CD8-positive, alpha-beta memory T cell (primary cell): ENCODE measurements at regions of chr17 and their contacts with region 1.

Region 1: DNA sequence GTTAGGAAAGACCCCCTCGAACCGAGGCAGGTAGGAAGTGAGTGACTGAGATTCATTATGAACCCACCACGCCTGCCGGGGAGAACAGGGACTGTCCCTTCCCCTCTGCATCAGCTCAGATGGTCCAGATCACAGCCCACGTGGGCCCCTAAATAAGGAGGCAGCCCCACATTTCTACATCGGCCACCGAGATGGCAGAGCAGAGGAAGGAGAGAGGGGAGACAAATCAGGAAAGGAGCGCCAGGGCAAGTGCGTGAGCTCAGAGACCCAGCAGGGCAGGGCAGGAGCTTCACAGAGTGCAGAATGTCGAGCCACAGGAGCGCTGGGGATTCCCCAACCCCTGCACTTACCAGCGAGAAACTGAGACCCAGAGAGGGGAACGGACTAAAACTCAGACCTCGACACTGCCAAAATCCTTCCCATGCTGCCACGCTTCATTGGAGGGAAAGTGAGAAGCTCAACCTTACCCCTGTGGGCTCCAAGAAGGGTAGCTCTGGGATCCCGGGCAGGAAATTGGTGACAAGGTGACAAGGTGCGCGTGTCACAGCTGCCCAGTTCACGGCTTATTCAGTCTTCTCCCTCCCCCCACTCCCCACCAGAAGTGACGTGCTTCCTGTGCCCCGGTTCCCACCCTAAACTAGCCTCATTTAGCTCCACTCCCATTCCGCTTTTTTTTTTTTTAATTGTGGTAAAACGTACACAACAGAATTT is at the start of gene ICAM2:
- DNase-seq: peak; percentile 90 to 98 (median 96)
- H3K4me3 ChIP-seq: peak within 1 kb of the TSS; percentile 83
- H3K4me3 Mint-ChIP-seq: peak within 1 kb of the TSS; percentile 96 to 100 (median 98)
- H3K27ac ChIP-seq: peak within 1 kb of the TSS; percentile 90
- H3K27ac Mint-ChIP-seq: peak within 1 kb of the TSS; percentile 99 to 100 (median 100)
- H3K4me1 ChIP-seq: peaks cover 82% of the 10 kb centered on the region
- H3K4me1 Mint-ChIP-seq: peaks cover 68 to 90% (median 72%) of the 10 kb centered on the region in 3 donors
- H3K27me3 ChIP-seq: no peaks in the 10 kb centered on the region
- H3K27me3 Mint-ChIP-seq: peaks cover 0 to 5% of the 10 kb centered on the region in 2 donors
- total RNA-seq, gene ICAM2: 77.4 to 80.7 TPM

Region 2: DNA sequence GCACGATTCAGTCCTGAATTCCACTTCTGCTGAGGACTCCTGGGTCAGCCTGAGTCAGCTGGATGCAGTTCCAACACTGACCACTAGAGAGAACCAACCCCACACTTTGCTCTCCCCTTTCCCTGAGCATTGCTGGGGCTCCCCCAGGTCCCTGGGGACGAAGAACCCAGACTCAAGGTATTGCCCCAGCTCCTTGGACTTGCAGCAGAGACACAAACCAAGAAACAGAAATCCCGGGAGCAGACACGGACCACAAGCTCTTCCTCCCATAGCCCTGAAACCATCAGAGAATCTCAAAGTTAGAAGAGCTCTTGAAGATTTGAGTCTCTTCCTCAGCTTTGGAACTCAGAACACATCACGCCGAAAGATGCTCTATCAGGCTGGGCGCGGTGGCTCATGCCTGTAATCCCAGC is 100.9 kb before region 1 on chr17:
- CTCF ChIA-PET with region 1: interaction called, 212 read pairs
- POLR2A ChIA-PET with region 1: interaction called, 13 read pairs
- DNase-seq: peak; percentile 57 to 81 (median 71)
- H3K4me3 ChIP-seq: no peak overlapping the region
- H3K4me3 Mint-ChIP-seq: no peak overlapping the region
- H3K27ac ChIP-seq: no peak overlapping the region
- H3K27ac Mint-ChIP-seq: peak overlapping the region in 5 of 8 donors; percentile 17 to 78 (median 63)
- H3K4me1 ChIP-seq: peaks cover 8% of the 10 kb centered on the region
- H3K4me1 Mint-ChIP-seq: peaks cover 6 to 10% (median 10%) of the 10 kb centered on the region in 3 donors
- H3K27me3 ChIP-seq: no peaks in the 10 kb centered on the region
- H3K27me3 Mint-ChIP-seq: peaks cover 0 to 3% of the 10 kb centered on the region in 2 donors

Region 3: GRCh38 chr17:63931099-63931561 is 89.1 kb before region 1 on chr17:
- CTCF ChIA-PET with region 1: interaction called, 27 read pairs
- POLR2A ChIA-PET with region 1: no interaction called
- DNase-seq: peak; percentile 40 to 74 (median 60)
- H3K4me3 ChIP-seq: peak overlapping the region; percentile 68
- H3K4me3 Mint-ChIP-seq: peak overlapping the region; percentile 75 to 93 (median 90)
- H3K27ac ChIP-seq: peak overlapping the region; percentile 27
- H3K27ac Mint-ChIP-seq: peak overlapping the region; percentile 81 to 96 (median 91)
- H3K4me1 ChIP-seq: peaks cover 24% of the 10 kb centered on the region
- H3K4me1 Mint-ChIP-seq: peaks cover 20 to 30% (median 23%) of the 10 kb centered on the region in 3 donors
- H3K27me3 ChIP-seq: no peaks in the 10 kb centered on the region
- H3K27me3 Mint-ChIP-seq: no peaks in the 10 kb centered on the region

Region 4: GRCh38 chr17:63984651-63985386 is 35.4 kb before region 1 on chr17:
- CTCF ChIA-PET with region 1: interaction called, 246 read pairs
- POLR2A ChIA-PET with region 1: interaction called, 3 read pairs
- DNase-seq: peak in 4 of 5 donors; percentile 51 to 64 (median 59)
- H3K4me3 ChIP-seq: no peak overlapping the region
- H3K4me3 Mint-ChIP-seq: peak overlapping the region in 6 of 7 donors; percentile 3 to 61 (median 30)
- H3K27ac ChIP-seq: no peak overlapping the region
- H3K27ac Mint-ChIP-seq: peak overlapping the region; percentile 61 to 78 (median 75)
- H3K4me1 ChIP-seq: peaks cover 11% of the 10 kb centered on the region
- H3K4me1 Mint-ChIP-seq: peaks cover 20 to 26% (median 24%) of the 10 kb centered on the region in 3 donors
- H3K27me3 ChIP-seq: no peaks in the 10 kb centered on the region
- H3K27me3 Mint-ChIP-seq: no peaks in the 10 kb centered on the region

Region 5: DNA sequence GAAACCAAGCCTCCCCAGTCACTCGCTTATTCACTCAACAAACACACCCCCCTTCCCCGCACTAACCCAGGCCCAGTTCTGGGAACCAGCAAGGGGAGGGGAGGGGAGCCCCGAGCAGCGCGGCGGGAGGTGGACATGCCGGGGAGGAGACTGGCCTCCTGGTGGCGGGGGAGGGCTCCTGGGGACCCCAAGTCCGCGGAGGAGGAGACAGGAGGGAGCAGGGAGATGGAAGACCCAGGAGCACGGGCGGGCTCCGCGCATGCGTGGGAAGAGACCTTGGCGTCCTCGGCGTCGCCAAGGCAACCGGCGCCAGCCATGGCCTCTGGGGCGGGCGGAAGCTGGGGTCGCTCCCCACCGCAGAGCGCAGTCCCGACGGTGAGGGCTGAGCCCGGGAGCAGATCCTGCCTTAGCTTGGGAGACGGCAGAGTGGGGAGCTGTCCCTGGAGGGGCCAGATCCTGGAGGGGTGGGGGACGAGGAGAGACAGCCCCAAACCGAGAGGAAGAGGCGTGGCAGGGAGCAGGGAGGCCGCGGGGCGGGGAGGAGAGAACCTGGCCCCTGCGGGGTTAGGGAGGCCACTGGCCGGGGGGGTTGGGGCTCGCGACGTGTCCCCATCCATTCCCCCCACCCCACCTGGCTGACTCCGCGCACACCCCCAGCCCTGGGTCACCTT is 22.0 kb before region 1 on chr17 and contains the start of gene PRR29:
- CTCF ChIA-PET with region 1: interaction called, 246 read pairs
- POLR2A ChIA-PET with region 1: interaction called, 67 read pairs
- DNase-seq: peak; percentile 68 to 88 (median 77)
- H3K4me3 ChIP-seq: peak within 1 kb of the TSS; percentile 52
- H3K4me3 Mint-ChIP-seq: peak within 1 kb of the TSS; percentile 87 to 96 (median 90)
- H3K27ac ChIP-seq: no peak within 1 kb of the TSS
- H3K27ac Mint-ChIP-seq: peak within 1 kb of the TSS; percentile 50 to 96 (median 90)
- H3K4me1 ChIP-seq: peaks cover 35% of the 10 kb centered on the region
- H3K4me1 Mint-ChIP-seq: peaks cover 44 to 58% (median 56%) of the 10 kb centered on the region in 3 donors
- H3K27me3 ChIP-seq: no peaks in the 10 kb centered on the region
- H3K27me3 Mint-ChIP-seq: no peaks in the 10 kb centered on the region
- total RNA-seq, gene PRR29: 0.24 to 0.51 TPM

Region 6: GRCh38 chr17:64051153-64051552 is 30.9 kb after region 1 on chr17:
- CTCF ChIA-PET with region 1: interaction called, 26 read pairs
- POLR2A ChIA-PET with region 1: interaction called, 12 read pairs
- DNase-seq: peak in 2 of 5 donors; percentile 53 to 66
- H3K4me3 ChIP-seq: peak overlapping the region; percentile 35
- H3K4me3 Mint-ChIP-seq: peak overlapping the region in 6 of 7 donors; percentile 21 to 84 (median 70)
- H3K27ac ChIP-seq: peak overlapping the region; percentile 38
- H3K27ac Mint-ChIP-seq: peak overlapping the region; percentile 61 to 96 (median 92)
- H3K4me1 ChIP-seq: peaks cover 45% of the 10 kb centered on the region
- H3K4me1 Mint-ChIP-seq: peaks cover 47 to 65% (median 60%) of the 10 kb centered on the region in 3 donors
- H3K27me3 ChIP-seq: no peaks in the 10 kb centered on the region
- H3K27me3 Mint-ChIP-seq: no peaks in the 10 kb centered on the region

Region 7: GRCh38 chr17:64145757-64146417 is 125.7 kb after region 1 on chr17:
- CTCF ChIA-PET with region 1: interaction called, 13 read pairs
- POLR2A ChIA-PET with region 1: interaction called, 36 read pairs
- DNase-seq: peak; percentile 89 to 98 (median 95)
- H3K4me3 ChIP-seq: peak overlapping the region; percentile 86
- H3K4me3 Mint-ChIP-seq: no peak overlapping the region
- H3K27ac ChIP-seq: peak overlapping the region; percentile 83
- H3K27ac Mint-ChIP-seq: no peak overlapping the region
- H3K4me1 ChIP-seq: peaks cover 25% of the 10 kb centered on the region
- H3K4me1 Mint-ChIP-seq: peaks cover 20 to 26% (median 26%) of the 10 kb centered on the region in 3 donors
- H3K27me3 ChIP-seq: no peaks in the 10 kb centered on the region
- H3K27me3 Mint-ChIP-seq: no peaks in the 10 kb centered on the region